Endothelial cell of umbilical vein (primary cell): ENCODE measurements at regions of chr22 and their contacts with region 1.

Region 1: DNA sequence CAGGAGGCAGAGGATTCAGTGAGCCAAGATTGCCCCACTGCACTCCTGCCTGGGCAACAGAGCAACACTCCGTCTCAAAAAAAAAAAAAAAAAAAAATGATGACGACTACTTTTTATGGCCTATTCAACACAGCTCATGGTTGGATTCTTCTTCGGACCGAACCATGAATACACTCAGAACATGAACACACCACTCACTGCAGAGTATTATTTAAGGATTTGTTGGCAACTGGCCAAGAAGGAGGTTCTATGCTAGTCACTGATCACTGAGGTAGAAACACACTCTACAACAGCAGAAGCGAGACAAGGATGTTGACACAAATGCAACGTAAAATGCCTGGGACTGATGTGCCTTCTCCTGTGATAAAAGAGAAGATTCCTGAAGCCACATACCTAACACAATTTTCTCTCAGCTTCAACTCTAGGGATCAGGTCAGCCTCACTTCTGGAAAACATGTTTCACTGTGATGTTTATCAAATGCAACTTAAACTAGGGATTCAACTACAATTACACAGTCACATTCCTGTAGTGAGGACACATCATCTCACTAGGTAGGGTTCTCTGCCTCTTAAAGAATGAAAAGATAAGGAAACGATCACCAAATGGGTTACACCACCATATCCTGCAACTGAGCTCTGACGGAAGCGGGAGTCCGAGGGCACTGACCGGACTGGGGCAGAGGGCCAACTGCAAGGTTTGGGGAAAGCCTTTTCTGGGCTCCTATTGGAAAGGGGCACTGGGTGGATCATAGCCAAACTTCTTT is 82.5 kb downstream of the SGSM3 start:
- DNase-seq: no peak
- H3K4me3 ChIP-seq: no peak overlapping the region
- H3K27ac ChIP-seq: no peak overlapping the region
- H3K4me1 ChIP-seq: no peaks in the 10 kb centered on the region
- H3K27me3 ChIP-seq: no peaks in the 10 kb centered on the region
- CTCF ChIP-seq: no peak
- POLR2A ChIP-seq: no peak

Region 2: GRCh38 chr22:40426594-40427333 is 26.1 kb before region 1 on chr22:
- CTCF ChIA-PET with region 1: no interaction called
- POLR2A ChIA-PET with region 1: no interaction called
- dilution Hi-C with region 1: no loop called
- intact Hi-C with region 1: loop called (anchors 1 kb)
- DNase-seq: peak; percentile 28
- H3K4me3 ChIP-seq: no peak overlapping the region
- H3K27ac ChIP-seq: no peak overlapping the region
- H3K4me1 ChIP-seq: no peaks in the 10 kb centered on the region
- H3K27me3 ChIP-seq: no peaks in the 10 kb centered on the region
- CTCF ChIP-seq: no peak
- POLR2A ChIP-seq: no peak